Ovary (tissue), 10 donors: ENCODE measurements at regions of chr3 and their contacts with region 1.

Region 1: DNA sequence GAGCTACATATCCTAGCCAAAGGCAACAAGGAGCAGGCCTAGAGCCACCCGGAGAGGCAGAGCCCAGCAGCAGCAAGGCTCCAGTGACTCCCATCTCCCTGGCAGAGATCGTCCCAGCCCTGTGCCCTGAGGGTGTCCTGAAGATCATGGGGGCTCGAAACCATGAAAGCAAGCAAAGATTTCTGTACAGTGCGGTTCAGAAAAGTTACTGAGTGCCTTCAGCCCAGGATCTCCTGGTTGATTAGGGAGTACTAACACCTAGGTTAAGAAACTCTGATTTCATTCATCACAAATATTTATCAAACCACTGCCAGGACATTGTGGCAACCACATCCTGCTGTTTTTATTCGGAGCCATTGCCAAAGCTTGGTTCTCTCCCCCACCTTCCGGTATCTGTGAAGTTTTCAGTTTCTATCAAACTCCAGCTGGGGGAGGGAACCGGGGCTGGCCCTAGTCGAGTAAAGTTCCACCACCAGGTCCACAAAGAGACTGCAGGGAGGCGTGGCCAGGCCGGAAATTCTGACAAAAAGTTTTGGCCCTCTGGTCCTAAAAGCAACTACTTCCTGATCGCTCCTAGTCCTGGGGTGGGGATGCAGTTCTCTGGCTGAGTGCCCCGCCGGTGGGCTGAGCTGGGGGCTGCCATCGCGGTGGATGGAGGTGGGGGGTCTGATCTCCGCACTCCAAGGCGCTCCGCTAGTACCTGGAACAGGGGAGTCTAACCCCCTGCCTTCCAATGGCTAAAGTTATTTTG is 1.2 kb downstream of the RAB43 start:
- DNase-seq: peak; percentile 84 to 90 (median 88)
- H3K4me3 ChIP-seq: peak overlapping the region; percentile 83
- H3K27ac ChIP-seq: peak overlapping the region; percentile 90 to 95
- H3K4me1 ChIP-seq: peaks cover 11% of the 10 kb centered on the region
- H3K27me3 ChIP-seq: no peaks in the 10 kb centered on the region
- CTCF ChIP-seq: peak in 2 of 3 donors; percentile 38 to 41
- EP300 ChIP-seq: no peak
- POLR2A ChIP-seq: peak; percentile 18

Region 2: DNA sequence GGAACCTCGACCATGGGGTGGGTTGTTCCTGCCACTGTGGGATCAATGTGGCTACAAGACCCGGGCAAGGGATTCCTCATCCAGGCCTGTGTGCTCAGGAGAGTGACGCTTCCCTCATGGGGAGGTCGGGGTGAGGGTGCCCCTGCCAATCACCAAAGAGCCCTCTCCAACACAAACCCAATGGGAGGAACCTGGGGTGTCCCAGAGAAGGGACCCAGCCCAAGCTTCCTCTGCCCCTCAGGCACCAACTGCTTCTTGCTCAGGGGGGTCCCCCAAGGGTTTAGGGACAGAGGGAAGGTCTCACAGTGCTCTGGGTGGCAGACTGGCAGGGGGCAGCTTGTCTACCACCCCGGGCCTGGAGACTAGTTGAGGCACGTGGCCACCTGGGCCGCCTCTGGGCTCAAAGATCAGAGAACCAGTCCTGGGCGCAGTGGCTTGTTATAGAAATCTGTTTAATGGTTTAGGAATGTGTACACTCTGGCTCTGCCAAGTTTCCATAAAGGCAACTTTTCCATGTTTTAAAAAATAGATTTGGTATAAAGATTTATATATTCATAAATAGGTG is 33.2 kb before region 1 on chr3:
- intact Hi-C with region 1: no loop called
- DNase-seq: peak; percentile 73 to 77 (median 76)
- H3K4me3 ChIP-seq: no peak overlapping the region
- H3K27ac ChIP-seq: peak overlapping the region; percentile 85 to 90
- H3K4me1 ChIP-seq: peaks cover 6% of the 10 kb centered on the region
- H3K27me3 ChIP-seq: no peaks in the 10 kb centered on the region
- CTCF ChIP-seq: no peak
- EP300 ChIP-seq: no peak
- POLR2A ChIP-seq: no peak

Region 3: GRCh38 chr3:129139911-129140310 is 19.5 kb after region 1 on chr3:
- intact Hi-C with region 1: no loop called
- DNase-seq: no peak
- H3K4me3 ChIP-seq: no peak overlapping the region
- H3K27ac ChIP-seq: no peak overlapping the region
- H3K4me1 ChIP-seq: no peaks in the 10 kb centered on the region
- H3K27me3 ChIP-seq: no peaks in the 10 kb centered on the region
- CTCF ChIP-seq: no peak
- EP300 ChIP-seq: no peak
- POLR2A ChIP-seq: no peak

Region 4: GRCh38 chr3:129183569-129184395 is 63.4 kb after region 1 on chr3 and contains the start of gene CNBP:
- intact Hi-C with region 1: loop called in 1 of 4 experiments (anchors 2 kb)
- DNase-seq: peak; percentile 92 to 96 (median 93)
- H3K4me3 ChIP-seq: peak within 1 kb of the TSS; percentile 100
- H3K27ac ChIP-seq: peak within 1 kb of the TSS; percentile 91 to 95
- H3K4me1 ChIP-seq: peaks cover 11% of the 10 kb centered on the region
- H3K27me3 ChIP-seq: no peaks in the 10 kb centered on the region
- CTCF ChIP-seq: peak in 1 of 3 donors; percentile 36
- EP300 ChIP-seq: no peak
- POLR2A ChIP-seq: peak; percentile 99
- total RNA-seq, gene CNBP: 383 to 530 (median 467) TPM